ENCODE measurements at regions of chr10 and their contacts with region 1.

Region 1: GRCh38 chr10:43348511-43349312 is 22.7 kb upstream of the FXYD4 start:
- DNase-seq: peak; percentile 82 to 99 (median 92)

Region 2: DNA sequence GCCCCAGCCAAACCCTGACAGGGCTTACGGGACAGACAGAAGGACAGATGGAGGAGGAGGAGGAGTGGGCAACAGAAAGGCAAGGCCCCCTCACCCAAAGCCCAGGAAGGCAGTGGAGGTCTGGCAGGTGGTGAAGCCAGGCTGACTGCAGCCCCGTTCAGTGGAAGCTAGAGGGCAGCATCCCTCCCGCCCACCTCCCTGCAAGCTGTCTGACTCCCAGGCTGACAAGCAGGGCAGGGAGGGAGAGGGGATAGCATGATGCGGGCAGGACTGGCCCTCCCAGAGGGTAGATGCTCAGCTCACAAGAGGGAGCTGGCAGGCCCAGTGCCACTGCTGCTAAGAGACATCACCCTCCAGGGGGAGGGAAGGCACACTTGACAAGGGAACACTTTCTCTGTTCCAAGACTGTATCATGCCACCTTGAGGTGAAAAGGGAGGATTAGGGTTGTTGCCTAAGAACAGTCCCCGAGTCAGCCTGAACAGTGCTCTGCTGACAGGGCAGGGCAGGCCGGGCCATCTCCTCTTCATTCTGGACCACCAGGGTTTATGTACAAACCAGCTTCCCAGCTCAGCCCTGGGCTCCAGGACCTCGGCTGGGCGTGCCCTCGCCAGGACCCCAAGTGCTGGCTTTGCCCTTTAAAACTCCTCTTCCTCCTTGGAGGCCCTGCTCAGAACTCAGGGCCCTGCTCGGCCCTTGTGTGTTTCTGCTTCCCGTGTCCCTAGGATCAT is 143.6 kb before region 1 on chr10:
- intact Hi-C with region 1: loop called (anchors 10 kb)
- DNase-seq: peak; percentile 35 to 93 (median 54)

Region 3: DNA sequence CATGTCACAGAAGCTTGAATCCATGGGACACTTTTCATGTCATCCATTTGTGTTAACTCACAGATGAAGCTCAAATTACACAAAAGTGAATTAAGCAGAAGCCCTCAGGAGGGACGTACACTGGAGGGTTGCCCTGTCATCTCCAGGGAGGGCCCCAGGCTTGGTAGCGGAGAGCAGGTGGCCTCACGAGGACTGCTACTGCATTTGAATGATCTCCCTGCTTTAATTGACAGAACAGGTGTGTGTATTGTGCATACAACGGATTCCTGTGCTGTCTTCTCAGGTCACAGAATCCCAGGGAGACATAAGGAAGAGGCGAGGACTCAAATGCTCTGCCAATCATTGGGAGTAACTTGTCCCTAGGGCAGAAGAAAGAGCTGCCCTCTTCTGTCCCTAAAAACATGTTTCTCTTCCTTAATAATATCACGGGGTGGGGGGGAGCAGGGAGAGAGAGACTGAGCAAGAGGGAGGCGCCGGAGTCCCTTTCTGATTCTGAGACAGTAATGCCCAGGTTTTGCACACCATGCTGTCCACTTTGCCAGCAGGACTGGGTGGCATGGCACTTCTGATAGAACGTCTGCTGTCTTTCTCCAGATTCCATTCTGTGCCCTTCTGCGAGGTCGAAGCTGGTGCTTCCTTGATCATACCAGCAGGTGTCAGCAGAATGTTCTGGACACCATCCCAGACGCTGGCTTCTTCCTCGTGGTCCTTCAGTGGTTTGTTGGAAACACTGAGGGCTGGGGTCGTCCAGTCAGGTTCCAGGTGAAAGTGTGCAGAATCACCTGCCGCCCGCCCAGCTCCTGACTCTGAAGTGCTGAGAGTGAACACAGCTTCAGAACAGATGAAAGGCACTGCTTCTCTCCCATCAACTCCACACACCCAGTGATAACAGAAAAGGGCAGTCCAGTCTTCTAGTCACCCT is 55.7 kb before region 1 on chr10:
- intact Hi-C with region 1: loop called (anchors 1 kb)
- DNase-seq: peak in 8 of 10 donors; percentile 21 to 91 (median 64)

Region 4: GRCh38 chr10:43384252-43385221 is 35.8 kb after region 1 on chr10:
- intact Hi-C with region 1: loop called (anchors 5 kb)
- DNase-seq: peak in 1 of 10 donors; percentile 70